CD4-positive, alpha-beta memory T cell (primary cell): ENCODE measurements at regions of chr6 and their contacts with region 1.

Region 1: GRCh38 chr6:136289579-136290409 is at the start of gene BCLAF1:
- DNase-seq: peak; percentile 99 to 100 (median 100)
- H3K4me3 ChIP-seq: peak within 1 kb of the TSS; percentile 92 to 94
- H3K4me3 Mint-ChIP-seq: peak within 1 kb of the TSS; percentile 93 to 100 (median 100)
- H3K27ac ChIP-seq: peak within 1 kb of the TSS; percentile 100
- H3K27ac Mint-ChIP-seq: peak within 1 kb of the TSS; percentile 99 to 100 (median 100)
- H3K4me1 ChIP-seq: peaks cover 56% of the 10 kb centered on the region
- H3K4me1 Mint-ChIP-seq: peaks cover 22 to 72% (median 47%) of the 10 kb centered on the region in 4 donors
- H3K27me3 ChIP-seq: no peaks in the 10 kb centered on the region
- H3K27me3 Mint-ChIP-seq: peaks cover 5% of the 10 kb centered on the region in 2 donors
- total RNA-seq, gene BCLAF1: 233 to 242 TPM

Region 2: GRCh38 chr6:135497412-135498269 is 792.2 kb before region 1 on chr6 and contains the start of gene AHI1:
- CTCF ChIA-PET with region 1: interaction called, 9 read pairs
- POLR2A ChIA-PET with region 1: interaction called, 87 read pairs
- intact Hi-C with region 1: loop called (anchors 1 kb)
- DNase-seq: peak; percentile 86 to 92 (median 89)
- H3K4me3 ChIP-seq: peak within 1 kb of the TSS; percentile 32 to 97
- H3K4me3 Mint-ChIP-seq: peak within 1 kb of the TSS in 3 of 8 donors; percentile 29 to 95 (median 59)
- H3K27ac ChIP-seq: peak within 1 kb of the TSS; percentile 87
- H3K27ac Mint-ChIP-seq: peak within 1 kb of the TSS in 3 of 7 donors; percentile 21 to 69 (median 28)
- H3K4me1 ChIP-seq: peaks cover 15% of the 10 kb centered on the region
- H3K4me1 Mint-ChIP-seq: peaks cover 5 to 9% (median 6%) of the 10 kb centered on the region in 4 donors
- H3K27me3 ChIP-seq: no peaks in the 10 kb centered on the region
- H3K27me3 Mint-ChIP-seq: no peaks in the 10 kb centered on the region
- total RNA-seq, gene AHI1: 12.2 to 12.8 TPM

Region 3: GRCh38 chr6:135974426-135974825 is 315.4 kb before region 1 on chr6:
- CTCF ChIA-PET with region 1: no interaction called
- POLR2A ChIA-PET with region 1: no interaction called
- intact Hi-C with region 1: no loop called
- DNase-seq: no peak
- H3K4me3 ChIP-seq: no peak overlapping the region
- H3K4me3 Mint-ChIP-seq: no peak overlapping the region
- H3K27ac ChIP-seq: no peak overlapping the region
- H3K27ac Mint-ChIP-seq: peak overlapping the region in 1 of 7 donors; percentile 58
- H3K4me1 ChIP-seq: no peaks in the 10 kb centered on the region
- H3K4me1 Mint-ChIP-seq: no peaks in the 10 kb centered on the region
- H3K27me3 ChIP-seq: no peaks in the 10 kb centered on the region
- H3K27me3 Mint-ChIP-seq: peaks cover 2 to 5% of the 10 kb centered on the region in 2 donors

Region 4: GRCh38 chr6:136235217-136235532 is 54.6 kb before region 1 on chr6:
- CTCF ChIA-PET with region 1: no interaction called
- POLR2A ChIA-PET with region 1: interaction called, 11 read pairs
- intact Hi-C with region 1: no loop called
- DNase-seq: no peak
- H3K4me3 ChIP-seq: no peak overlapping the region
- H3K4me3 Mint-ChIP-seq: peak overlapping the region in 1 of 8 donors; percentile 18
- H3K27ac ChIP-seq: no peak overlapping the region
- H3K27ac Mint-ChIP-seq: no peak overlapping the region
- H3K4me1 ChIP-seq: no peaks in the 10 kb centered on the region
- H3K4me1 Mint-ChIP-seq: peaks cover 0 to 12% (median 7%) of the 10 kb centered on the region in 4 donors
- H3K27me3 ChIP-seq: no peaks in the 10 kb centered on the region
- H3K27me3 Mint-ChIP-seq: no peaks in the 10 kb centered on the region

Region 5: DNA sequence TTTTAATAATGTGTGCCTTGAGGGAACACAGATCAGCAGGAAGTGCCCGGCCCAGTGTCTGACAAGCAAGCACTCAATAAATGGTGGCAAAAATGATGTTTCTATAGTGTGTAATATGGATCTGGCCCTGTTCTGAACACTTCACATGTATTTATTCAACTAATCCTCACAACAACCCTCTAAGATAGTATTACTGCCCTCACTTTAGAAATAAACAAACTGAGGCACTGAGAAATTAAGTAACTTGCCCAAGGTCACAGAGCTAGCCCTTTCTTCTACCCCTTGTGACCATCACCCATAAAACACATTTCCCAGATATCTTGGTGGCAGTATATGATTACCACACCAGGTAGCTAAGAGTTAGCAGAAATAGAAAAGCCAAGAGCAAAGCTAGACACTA is 26.9 kb before region 1 on chr6:
- CTCF ChIA-PET with region 1: interaction called, 3 read pairs
- POLR2A ChIA-PET with region 1: interaction called, 22 read pairs
- intact Hi-C with region 1: no loop called
- DNase-seq: no peak
- H3K4me3 ChIP-seq: no peak overlapping the region
- H3K4me3 Mint-ChIP-seq: no peak overlapping the region
- H3K27ac ChIP-seq: no peak overlapping the region
- H3K27ac Mint-ChIP-seq: peak overlapping the region in 2 of 7 donors; percentile 14 to 62
- H3K4me1 ChIP-seq: peaks cover 8% of the 10 kb centered on the region
- H3K4me1 Mint-ChIP-seq: peaks cover 19 to 37% (median 28%) of the 10 kb centered on the region in 4 donors
- H3K27me3 ChIP-seq: no peaks in the 10 kb centered on the region
- H3K27me3 Mint-ChIP-seq: no peaks in the 10 kb centered on the region

Region 6: GRCh38 chr6:136317021-136317694 is 27.4 kb after region 1 on chr6:
- CTCF ChIA-PET with region 1: interaction called, 12 read pairs
- POLR2A ChIA-PET with region 1: interaction called, 29 read pairs
- intact Hi-C with region 1: loop called (anchors 1 kb)
- DNase-seq: peak; percentile 68 to 72 (median 69)
- H3K4me3 ChIP-seq: no peak overlapping the region
- H3K4me3 Mint-ChIP-seq: no peak overlapping the region
- H3K27ac ChIP-seq: no peak overlapping the region
- H3K27ac Mint-ChIP-seq: peak overlapping the region in 2 of 7 donors; percentile 35 to 77
- H3K4me1 ChIP-seq: no peaks in the 10 kb centered on the region
- H3K4me1 Mint-ChIP-seq: peaks cover 0 to 4% (median 1%) of the 10 kb centered on the region in 4 donors
- H3K27me3 ChIP-seq: no peaks in the 10 kb centered on the region
- H3K27me3 Mint-ChIP-seq: peaks cover 0 to 5% of the 10 kb centered on the region in 2 donors

Region 7: DNA sequence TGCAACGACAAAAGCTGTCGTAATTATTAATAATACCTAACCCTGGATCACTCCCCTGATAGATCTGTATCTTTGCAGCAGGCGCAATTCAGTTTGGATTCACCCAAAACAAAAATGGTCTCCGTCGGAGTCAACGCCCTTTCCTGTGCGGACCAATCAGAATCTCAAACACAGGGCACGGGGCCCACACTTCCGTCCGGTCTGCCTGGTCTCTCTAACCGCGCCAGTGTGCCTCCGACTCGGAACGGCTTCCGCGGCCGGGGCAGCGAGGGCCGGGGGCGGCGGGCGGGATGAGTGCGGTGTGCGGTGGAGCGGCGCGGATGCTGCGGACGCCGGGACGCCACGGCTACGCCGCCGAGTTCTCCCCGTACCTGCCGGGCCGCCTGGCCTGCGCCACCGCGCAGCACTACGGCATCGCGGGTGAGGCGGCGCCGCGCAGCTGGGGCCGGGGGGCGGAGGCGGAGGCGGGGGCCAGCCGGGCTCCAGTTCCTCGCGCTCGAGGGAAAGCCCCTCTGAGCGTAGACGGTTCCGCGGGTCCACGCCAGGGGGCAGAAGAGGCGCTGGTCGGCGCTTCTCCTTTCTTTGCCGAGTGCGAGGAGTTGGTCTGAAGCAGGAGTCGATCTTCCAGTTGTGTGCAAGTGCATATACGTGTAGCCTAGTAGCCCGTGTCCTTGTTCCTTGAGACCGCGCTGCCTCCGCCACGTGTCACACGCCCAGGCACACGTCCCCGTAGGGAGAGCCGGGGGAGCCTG is 532.8 kb after region 1 on chr6 and contains the start of gene PEX7:
- CTCF ChIA-PET with region 1: no interaction called
- POLR2A ChIA-PET with region 1: interaction called, 10 read pairs
- intact Hi-C with region 1: loop called (anchors 1 kb)
- DNase-seq: peak; percentile 90 to 94 (median 93)
- H3K4me3 ChIP-seq: peak within 1 kb of the TSS; percentile 58 to 82
- H3K4me3 Mint-ChIP-seq: peak within 1 kb of the TSS; percentile 93 to 99 (median 96)
- H3K27ac ChIP-seq: peak within 1 kb of the TSS; percentile 87
- H3K27ac Mint-ChIP-seq: peak within 1 kb of the TSS; percentile 94 to 99 (median 97)
- H3K4me1 ChIP-seq: peaks cover 12% of the 10 kb centered on the region
- H3K4me1 Mint-ChIP-seq: peaks cover 13 to 46% (median 22%) of the 10 kb centered on the region in 4 donors
- H3K27me3 ChIP-seq: no peaks in the 10 kb centered on the region
- H3K27me3 Mint-ChIP-seq: peaks cover 6 to 8% of the 10 kb centered on the region in 2 donors
- total RNA-seq, gene PEX7: 4.4 to 5.8 TPM